PC-3 (cell line): ENCODE measurements at regions of chr3 and their contacts with region 1.

Region 1: GRCh38 chr3:136075218-136075808 is 109.8 kb downstream of the PPP2R3A start:
- DNase-seq: peak; percentile 70
- ATAC-seq: 0 out of 2 replicates have a peak, but pooled peaks have one; percentile 22
- H3K4me3 ChIP-seq: no peak overlapping the region
- H3K27ac ChIP-seq: no peak overlapping the region
- H3K4me1 ChIP-seq: peaks cover 20% of the 10 kb centered on the region
- H3K27me3 ChIP-seq: no peaks in the 10 kb centered on the region
- CTCF ChIP-seq: peak; percentile 81

Region 2: DNA sequence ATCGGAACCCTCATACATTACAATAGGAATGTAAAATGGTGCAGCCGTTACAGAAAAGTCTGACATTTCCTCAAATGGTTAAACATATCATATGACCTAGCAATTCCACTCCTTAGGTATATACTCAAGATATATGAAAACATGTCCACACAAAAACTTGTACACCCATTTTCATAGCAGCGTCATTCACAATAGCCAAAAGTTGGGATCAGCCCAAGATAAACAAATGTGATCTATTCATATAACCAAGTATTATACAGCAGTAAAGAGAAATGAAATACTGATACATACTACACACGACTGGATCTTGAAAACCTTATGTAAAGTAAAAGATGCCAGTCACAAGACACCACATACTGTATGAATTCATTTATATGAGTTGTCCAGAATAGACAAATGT is 18.5 kb after region 1 on chr3:
- CTCF ChIA-PET with region 1: no interaction called
- POLR2A ChIA-PET with region 1: no interaction called
- intact Hi-C with region 1: no loop called
- DNase-seq: no peak
- ATAC-seq: no peak
- H3K4me3 ChIP-seq: no peak overlapping the region
- H3K27ac ChIP-seq: no peak overlapping the region
- H3K4me1 ChIP-seq: no peaks in the 10 kb centered on the region
- H3K27me3 ChIP-seq: no peaks in the 10 kb centered on the region
- CTCF ChIP-seq: no peak

Region 3: GRCh38 chr3:136250226-136250902 is 175.1 kb after region 1 on chr3 and contains the start of gene PCCB:
- CTCF ChIA-PET with region 1: no interaction called
- POLR2A ChIA-PET with region 1: no interaction called
- intact Hi-C with region 1: loop called (anchors 1 kb)
- DNase-seq: peak; percentile 88
- ATAC-seq: peak; percentile 100
- H3K4me3 ChIP-seq: peak within 1 kb of the TSS; percentile 66
- H3K27ac ChIP-seq: peak within 1 kb of the TSS; percentile 81
- H3K4me1 ChIP-seq: peaks cover 13% of the 10 kb centered on the region
- H3K27me3 ChIP-seq: no peaks in the 10 kb centered on the region
- CTCF ChIP-seq: peak; percentile 57
- total RNA-seq, gene PCCB: 53.5 and 58.2 TPM in 2 replicates

Region 4: DNA sequence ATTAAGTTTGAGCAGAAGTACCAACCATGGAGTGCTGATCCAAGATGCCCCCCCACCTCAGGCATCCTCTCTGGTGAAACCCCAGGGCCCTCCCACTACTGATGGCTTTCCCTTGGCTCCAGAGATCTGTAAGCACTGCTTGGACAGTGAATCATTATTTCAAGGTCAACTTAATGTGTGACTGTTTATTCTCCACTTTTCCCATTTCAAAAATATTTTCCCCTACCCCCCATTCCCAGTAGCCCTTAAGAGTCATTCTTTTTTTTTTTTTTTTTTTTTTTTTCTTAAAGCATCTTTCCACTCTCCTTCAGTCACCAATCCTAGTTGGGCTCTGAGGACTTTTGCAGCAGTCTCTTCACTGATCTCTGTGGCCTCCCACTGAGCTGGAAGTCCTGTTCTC is 257.5 kb after region 1 on chr3:
- CTCF ChIA-PET with region 1: no interaction called
- POLR2A ChIA-PET with region 1: no interaction called
- intact Hi-C with region 1: no loop called
- DNase-seq: no peak
- ATAC-seq: no peak
- H3K4me3 ChIP-seq: no peak overlapping the region
- H3K27ac ChIP-seq: no peak overlapping the region
- H3K4me1 ChIP-seq: no peaks in the 10 kb centered on the region
- H3K27me3 ChIP-seq: no peaks in the 10 kb centered on the region
- CTCF ChIP-seq: no peak

Region 5: GRCh38 chr3:136343446-136344281 is 268.4 kb after region 1 on chr3:
- CTCF ChIA-PET with region 1: no interaction called
- POLR2A ChIA-PET with region 1: no interaction called
- intact Hi-C with region 1: loop called (anchors 5 kb)
- DNase-seq: peak; percentile 83
- ATAC-seq: peak; percentile 95
- H3K4me3 ChIP-seq: no peak overlapping the region
- H3K27ac ChIP-seq: peak overlapping the region; percentile 37
- H3K4me1 ChIP-seq: peaks cover 16% of the 10 kb centered on the region
- H3K27me3 ChIP-seq: no peaks in the 10 kb centered on the region
- CTCF ChIP-seq: no peak

Region 6: GRCh38 chr3:136505676-136506075 is 430.4 kb after region 1 on chr3:
- CTCF ChIA-PET with region 1: no interaction called
- POLR2A ChIA-PET with region 1: no interaction called
- intact Hi-C with region 1: loop called (anchors 5 kb)
- DNase-seq: no peak
- ATAC-seq: no peak
- H3K4me3 ChIP-seq: no peak overlapping the region
- H3K27ac ChIP-seq: no peak overlapping the region
- H3K4me1 ChIP-seq: no peaks in the 10 kb centered on the region
- H3K27me3 ChIP-seq: no peaks in the 10 kb centered on the region
- CTCF ChIP-seq: no peak

Region 7: GRCh38 chr3:136752422-136753325 is 677.4 kb after region 1 on chr3:
- CTCF ChIA-PET with region 1: interaction called, 13 read pairs
- POLR2A ChIA-PET with region 1: interaction called, 3 read pairs
- intact Hi-C with region 1: loop called (anchors 1 kb)
- DNase-seq: peak; percentile 96
- ATAC-seq: peak; percentile 88
- H3K4me3 ChIP-seq: peak overlapping the region; percentile 81
- H3K27ac ChIP-seq: peak overlapping the region; percentile 94
- H3K4me1 ChIP-seq: peaks cover 9% of the 10 kb centered on the region
- H3K27me3 ChIP-seq: no peaks in the 10 kb centered on the region
- CTCF ChIP-seq: no peak